ENCODE measurements at regions of chr2 and their contacts with region 1.

Region 1: GRCh38 chr2:9423100-9423921 is at the starts of genes CPSF3 and ITGB1BP1:
- DNase-seq: peak; percentile 97 to 99 (median 98)
- H3K4me3 ChIP-seq: peak within 1 kb of the TSS; percentile 74
- H3K27ac ChIP-seq: peak within 1 kb of the TSS; percentile 66 to 90
- H3K4me1 ChIP-seq: peaks cover 6% of the 10 kb centered on the region
- H3K27me3 ChIP-seq: no peaks in the 10 kb centered on the region
- CTCF ChIP-seq: peak in 1 of 3 donors; percentile 72
- EP300 ChIP-seq: no peak
- POLR2A ChIP-seq: peak; percentile 76
- total RNA-seq, gene CPSF3: 14.8 to 24.6 (median 19.8) TPM
- total RNA-seq, gene ITGB1BP1: 14.5 to 82.2 (median 64.5) TPM

Region 2: DNA sequence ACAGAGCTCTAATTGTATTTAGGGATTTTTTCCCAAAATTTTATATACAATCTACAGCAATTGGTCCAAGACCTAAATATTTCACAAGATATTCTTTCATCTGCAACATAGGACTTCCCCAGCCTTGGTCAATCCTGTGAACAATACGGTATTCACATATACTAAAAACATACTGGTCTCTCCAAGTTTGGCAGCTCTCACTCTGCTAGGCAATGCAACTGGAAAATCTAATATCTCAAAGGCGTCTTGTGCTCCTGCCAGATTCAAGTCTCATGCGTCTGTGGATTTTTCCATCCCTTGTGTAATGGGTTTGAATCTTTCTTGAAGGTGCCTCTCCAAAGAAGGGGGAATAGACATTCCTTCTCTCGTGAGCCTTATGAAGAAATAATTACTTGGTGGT is 392.5 kb before region 1 on chr2:
- intact Hi-C with region 1: no loop called
- DNase-seq: no peak
- H3K4me3 ChIP-seq: no peak overlapping the region
- H3K27ac ChIP-seq: no peak overlapping the region
- H3K4me1 ChIP-seq: no peaks in the 10 kb centered on the region
- H3K27me3 ChIP-seq: no peaks in the 10 kb centered on the region
- CTCF ChIP-seq: no peak
- EP300 ChIP-seq: no peak
- POLR2A ChIP-seq: no peak

Region 3: GRCh38 chr2:9238591-9239326 is 184.6 kb before region 1 on chr2:
- intact Hi-C with region 1: no loop called
- DNase-seq: no peak
- H3K4me3 ChIP-seq: no peak overlapping the region
- H3K27ac ChIP-seq: peak overlapping the region in 1 of 2 donors; percentile 61
- H3K4me1 ChIP-seq: peaks cover 40% of the 10 kb centered on the region
- H3K27me3 ChIP-seq: no peaks in the 10 kb centered on the region
- CTCF ChIP-seq: no peak
- EP300 ChIP-seq: no peak
- POLR2A ChIP-seq: no peak

Region 4: DNA sequence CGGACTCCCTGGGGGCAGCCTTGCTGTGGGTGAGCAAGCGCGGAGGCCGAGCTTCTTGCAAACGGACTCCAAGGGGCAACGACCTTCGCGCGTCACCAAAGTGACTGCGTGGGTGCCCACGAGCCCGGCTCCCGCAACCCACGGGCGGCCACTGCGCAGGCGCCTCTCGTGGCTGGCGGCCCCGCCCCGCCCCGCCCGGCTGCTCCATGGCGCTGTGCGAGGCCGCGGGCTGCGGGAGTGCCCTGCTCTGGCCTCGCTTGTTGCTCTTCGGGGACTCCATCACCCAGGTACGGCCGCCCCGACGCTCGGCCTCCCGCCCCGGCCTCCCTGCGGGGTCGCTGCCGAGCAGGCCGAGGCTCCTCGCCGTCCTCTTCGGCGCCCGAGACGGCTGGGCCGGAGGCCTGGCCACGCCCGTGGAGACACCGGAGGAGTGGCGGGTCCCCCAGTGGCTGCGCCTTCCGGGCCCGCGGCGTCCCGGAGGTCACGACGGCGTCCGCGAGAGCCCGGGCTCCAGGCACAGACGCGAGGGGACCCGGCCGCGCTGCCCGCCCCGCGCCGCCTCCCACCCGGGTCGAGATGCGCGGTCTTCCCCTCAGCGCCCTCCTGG is 51.2 kb after region 1 on chr2 and contains the start of gene IAH1:
- intact Hi-C with region 1: loop called in 1 of 4 experiments (anchors 10 kb)
- DNase-seq: peak; percentile 63 to 80 (median 71)
- H3K4me3 ChIP-seq: peak within 1 kb of the TSS; percentile 72
- H3K27ac ChIP-seq: peak within 1 kb of the TSS; percentile 77 to 82
- H3K4me1 ChIP-seq: peaks cover 4% of the 10 kb centered on the region
- H3K27me3 ChIP-seq: no peaks in the 10 kb centered on the region
- CTCF ChIP-seq: no peak
- EP300 ChIP-seq: no peak
- POLR2A ChIP-seq: peak; percentile 78
- total RNA-seq, gene IAH1: 36.8 to 59.7 (median 44.8) TPM

Region 5: GRCh38 chr2:9555297-9556141 is 132.2 kb after region 1 on chr2 and contains the start of gene ADAM17:
- intact Hi-C with region 1: no loop called
- DNase-seq: peak; percentile 93 to 96 (median 96)
- H3K4me3 ChIP-seq: peak within 1 kb of the TSS; percentile 92
- H3K27ac ChIP-seq: peak within 1 kb of the TSS; percentile 97 to 99
- H3K4me1 ChIP-seq: peaks cover 6% of the 10 kb centered on the region
- H3K27me3 ChIP-seq: no peaks in the 10 kb centered on the region
- CTCF ChIP-seq: peak in 2 of 3 donors; percentile 67 to 94
- EP300 ChIP-seq: peak; percentile 54
- POLR2A ChIP-seq: peak; percentile 94
- total RNA-seq, gene ADAM17: 24.3 to 46.6 (median 30.0) TPM

Region 6: DNA sequence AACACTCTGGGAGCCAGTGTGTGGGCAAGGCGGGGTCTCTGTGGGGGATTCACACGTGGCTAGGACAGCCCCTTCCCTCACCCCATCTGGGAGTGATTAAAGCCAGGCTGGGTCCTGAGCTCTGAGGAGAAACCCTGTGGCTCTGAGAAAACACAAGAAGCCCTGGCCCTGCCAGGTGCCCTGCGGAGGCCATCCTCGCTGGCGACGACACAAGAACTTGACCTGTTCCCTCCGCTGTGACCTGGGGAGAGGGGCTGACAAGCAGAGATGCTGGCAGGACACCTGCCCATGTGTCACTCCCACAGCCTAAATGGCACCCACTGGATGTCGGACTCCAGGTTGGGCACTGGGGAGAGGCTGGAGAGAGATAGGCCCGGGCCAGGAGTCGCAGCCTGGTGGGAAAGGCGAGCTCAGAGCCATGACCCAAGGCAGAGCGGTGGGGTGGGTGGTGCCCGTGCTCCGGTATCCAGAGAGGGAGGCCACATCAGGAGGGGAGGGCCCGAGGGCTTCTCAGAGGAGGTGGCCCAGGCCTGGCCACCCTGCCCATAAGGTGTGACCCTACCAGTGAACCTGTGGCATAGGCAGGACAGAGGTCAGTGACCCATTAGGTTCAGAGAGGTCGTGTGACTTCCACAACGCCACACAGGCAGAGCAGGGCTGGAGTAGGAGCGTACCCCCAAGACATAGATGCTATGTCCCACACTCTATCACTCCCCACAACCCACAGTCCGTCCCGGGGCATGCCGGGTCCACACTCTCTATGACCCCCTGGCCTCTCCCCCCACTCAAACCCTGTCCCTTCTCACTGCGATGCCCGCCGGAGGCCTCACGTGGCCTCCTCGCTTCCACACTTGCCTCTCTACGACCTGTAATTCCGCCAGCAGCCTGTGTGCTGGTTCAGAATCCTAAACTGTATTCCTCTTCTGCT is 820.0 kb after region 1 on chr2:
- intact Hi-C with region 1: no loop called
- DNase-seq: no peak
- H3K4me3 ChIP-seq: no peak overlapping the region
- H3K27ac ChIP-seq: no peak overlapping the region
- H3K4me1 ChIP-seq: no peaks in the 10 kb centered on the region
- H3K27me3 ChIP-seq: no peaks in the 10 kb centered on the region
- CTCF ChIP-seq: no peak
- EP300 ChIP-seq: no peak
- POLR2A ChIP-seq: no peak

Measured in ovary (tissue), 10 donors.